Transverse colon (tissue), 4 donors: ENCODE measurements at regions of chr5 and their contacts with region 1.

Region 1: DNA sequence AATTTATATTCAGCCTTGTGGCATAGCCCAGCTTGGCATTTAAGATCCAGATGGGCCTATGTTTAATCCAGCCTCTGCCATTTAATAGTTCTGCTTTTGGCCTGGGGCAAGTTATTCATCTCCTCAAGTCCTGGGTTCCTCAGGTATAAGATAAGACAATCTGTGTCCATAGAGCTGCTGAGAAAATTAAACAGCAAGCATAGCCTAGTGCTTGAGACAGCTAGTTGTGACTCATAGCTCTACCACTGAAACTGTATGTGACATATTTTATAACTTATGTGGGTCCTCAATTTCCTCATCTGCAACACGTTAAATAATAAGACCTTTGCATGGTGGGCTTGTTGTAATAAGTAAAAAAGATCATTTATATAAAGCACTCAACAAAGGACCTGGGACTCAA is 53.3 kb upstream of the ATP10B start:
- DNase-seq: no peak
- H3K4me3 ChIP-seq: no peak overlapping the region
- H3K27ac ChIP-seq: no peak overlapping the region
- H3K4me1 ChIP-seq: no peaks in the 10 kb centered on the region
- H3K27me3 ChIP-seq: no peaks in the 10 kb centered on the region
- CTCF ChIP-seq: no peak
- EP300 ChIP-seq: no peak
- POLR2A ChIP-seq: no peak

Region 2: DNA sequence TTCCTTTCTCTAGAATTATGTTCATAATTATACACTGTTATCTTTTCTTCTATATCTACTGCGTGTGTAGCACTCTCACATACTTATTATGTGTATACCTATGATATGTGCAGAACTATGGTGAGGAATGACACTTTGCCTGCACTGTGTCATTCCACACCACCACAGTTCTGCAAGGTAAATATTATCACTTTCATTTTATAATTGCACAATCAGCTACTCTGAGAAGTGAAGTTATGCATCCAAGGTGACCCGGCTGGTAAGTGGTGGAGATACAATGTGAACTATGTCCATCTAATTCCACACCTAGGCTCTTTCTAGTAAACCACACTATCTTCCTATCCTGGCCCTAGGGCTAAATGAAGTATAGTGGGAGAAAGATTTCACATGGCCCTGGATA is 116.9 kb after region 1 on chr5:
- in situ Hi-C with region 1: no loop called
- intact Hi-C with region 1: no loop called
- DNase-seq: no peak
- H3K4me3 ChIP-seq: no peak overlapping the region
- H3K27ac ChIP-seq: no peak overlapping the region
- H3K4me1 ChIP-seq: no peaks in the 10 kb centered on the region
- H3K27me3 ChIP-seq: no peaks in the 10 kb centered on the region
- CTCF ChIP-seq: no peak
- EP300 ChIP-seq: no peak
- POLR2A ChIP-seq: no peak

Region 3: GRCh38 chr5:162573758-162574157 is 1668.5 kb after region 1 on chr5:
- in situ Hi-C with region 1: no loop called
- intact Hi-C with region 1: loop called (anchors 5 kb)
- DNase-seq: no peak
- H3K4me3 ChIP-seq: no peak overlapping the region
- H3K27ac ChIP-seq: no peak overlapping the region
- H3K4me1 ChIP-seq: no peaks in the 10 kb centered on the region
- H3K27me3 ChIP-seq: no peaks in the 10 kb centered on the region
- CTCF ChIP-seq: no peak
- EP300 ChIP-seq: no peak
- POLR2A ChIP-seq: no peak